PC-9 (cell line): ENCODE measurements at regions of chr2 and their contacts with region 1.

Region 1: DNA sequence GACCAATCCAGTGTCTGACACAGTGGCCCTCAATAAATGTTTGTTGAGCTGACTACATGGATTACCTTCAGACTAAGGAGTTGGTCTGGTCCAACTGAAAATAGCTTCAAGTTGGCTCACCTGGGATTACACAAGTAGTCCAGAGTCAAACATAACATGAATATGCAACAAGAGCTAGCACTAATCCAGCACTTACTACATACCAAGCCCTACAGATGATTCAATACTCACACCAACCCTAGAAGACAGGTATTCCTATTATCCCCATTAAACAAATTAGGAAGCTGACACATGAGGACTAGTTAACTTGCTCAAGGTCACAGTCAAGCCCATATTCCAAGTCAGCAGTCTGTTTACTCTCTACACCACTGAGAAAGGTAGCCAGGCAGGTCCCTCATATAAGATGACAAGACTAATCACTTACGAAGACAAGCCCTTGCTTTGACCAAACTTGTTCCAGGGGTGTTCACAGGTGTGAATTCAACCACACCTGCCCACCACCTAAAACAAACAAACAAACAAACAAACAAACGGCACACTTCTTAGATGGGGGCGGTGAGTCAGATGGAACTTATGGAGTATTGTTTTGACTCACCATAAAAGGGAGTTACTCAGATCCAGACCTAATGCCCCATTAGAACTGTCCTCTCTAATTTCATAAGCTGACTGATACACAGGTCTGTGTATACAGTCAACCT is 29.1 kb downstream of the TMEM131 start:
- DNase-seq: peak in 1 of 2 experiments; percentile 86
- H3K4me3 ChIP-seq: no peak overlapping the region
- H3K27ac ChIP-seq: peak overlapping the region; percentile 51
- H3K4me1 ChIP-seq: peaks cover 26% of the 10 kb centered on the region
- H3K27me3 ChIP-seq: no peaks in the 10 kb centered on the region
- CTCF ChIP-seq: no peak

Region 2: GRCh38 chr2:96951093-96951654 is 1015.5 kb before region 1 on chr2:
- CTCF ChIA-PET with region 1: no interaction called
- POLR2A ChIA-PET with region 1: interaction called, 10 read pairs
- intact Hi-C with region 1: no loop called
- DNase-seq: peak; percentile 57 to 88
- H3K4me3 ChIP-seq: no peak overlapping the region
- H3K27ac ChIP-seq: no peak overlapping the region
- H3K4me1 ChIP-seq: no peaks in the 10 kb centered on the region
- H3K27me3 ChIP-seq: no peaks in the 10 kb centered on the region
- CTCF ChIP-seq: peak; percentile 99

Region 3: GRCh38 chr2:97935719-97936161 is 30.9 kb before region 1 on chr2:
- CTCF ChIA-PET with region 1: no interaction called
- POLR2A ChIA-PET with region 1: no interaction called
- intact Hi-C with region 1: no loop called
- DNase-seq: peak; percentile 54 to 80
- H3K4me3 ChIP-seq: peak overlapping the region; percentile 37; the same call in 1 of the 2 replicates
- H3K27ac ChIP-seq: peak overlapping the region; percentile 34
- H3K4me1 ChIP-seq: peaks cover 31% of the 10 kb centered on the region
- H3K27me3 ChIP-seq: no peaks in the 10 kb centered on the region
- CTCF ChIP-seq: no peak

Region 4: DNA sequence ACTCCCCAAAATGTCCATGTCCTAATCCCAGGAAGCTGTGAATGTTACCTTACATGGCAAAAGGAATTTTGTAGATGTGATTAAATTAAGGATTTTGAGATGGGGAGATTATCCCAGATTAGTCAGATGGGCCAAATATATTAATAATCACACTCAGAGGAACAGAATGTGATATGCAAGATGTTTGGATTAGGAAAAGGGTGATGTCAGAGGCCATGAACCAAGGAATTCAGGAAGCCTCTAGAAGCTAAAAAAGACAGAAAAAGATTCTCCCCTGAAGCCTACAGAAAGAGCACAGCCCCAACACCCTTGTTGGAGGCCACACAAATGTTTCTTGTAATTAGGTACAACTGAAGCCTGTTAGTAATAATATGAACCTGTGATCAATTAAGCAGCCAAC is 16.0 kb after region 1 on chr2:
- CTCF ChIA-PET with region 1: no interaction called
- POLR2A ChIA-PET with region 1: no interaction called
- intact Hi-C with region 1: no loop called
- DNase-seq: no peak
- H3K4me3 ChIP-seq: no peak overlapping the region
- H3K27ac ChIP-seq: no peak overlapping the region
- H3K4me1 ChIP-seq: no peaks in the 10 kb centered on the region
- H3K27me3 ChIP-seq: no peaks in the 10 kb centered on the region
- CTCF ChIP-seq: no peak